ENCODE measurements at regions of chr12 and their contacts with region 1.

Region 1: DNA sequence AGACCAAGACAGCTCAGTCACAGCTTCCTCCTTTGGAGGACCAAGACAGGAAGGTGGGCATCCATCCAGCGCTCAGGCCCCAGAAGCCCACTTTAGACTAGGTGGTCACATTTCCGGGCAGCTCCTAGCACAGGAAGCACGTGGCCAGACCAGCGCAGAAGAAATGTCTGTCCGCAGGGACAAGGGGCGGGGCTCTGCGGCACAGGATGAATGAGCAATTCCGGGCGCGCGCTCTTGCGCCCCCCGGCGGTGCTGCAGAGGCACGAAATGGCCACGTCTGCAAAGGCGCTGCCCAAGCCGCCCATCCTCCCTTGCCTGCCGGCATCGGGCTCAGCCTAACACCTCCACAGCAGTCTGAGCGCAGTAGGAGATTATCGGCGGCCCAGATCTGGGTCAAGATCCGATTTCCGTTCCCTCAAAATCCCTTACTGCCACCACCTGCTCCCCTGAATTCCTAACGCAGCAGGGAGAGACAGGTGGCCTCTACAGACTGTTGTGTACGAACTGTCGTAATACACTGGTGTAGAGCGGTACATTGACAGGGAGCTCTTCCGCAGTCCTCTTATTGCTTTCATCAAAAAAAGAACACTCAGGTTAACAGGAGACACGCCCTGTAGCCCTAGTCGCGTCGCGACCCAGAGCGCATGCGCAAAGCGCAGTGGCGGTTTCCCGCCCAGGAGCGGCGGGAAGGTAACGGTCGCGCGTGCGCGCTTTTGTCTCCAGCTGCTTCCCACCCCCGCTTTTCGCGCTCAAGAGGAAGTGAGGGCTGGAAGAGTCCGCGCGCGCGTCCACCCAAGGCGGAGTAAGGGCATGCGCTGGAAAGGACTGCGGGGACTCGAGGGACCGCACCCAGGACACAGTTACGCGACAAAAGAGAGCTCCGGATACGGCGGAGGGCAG is 794 bp downstream of the TUBA1B start:
- DNase-seq: peak; percentile 85 to 94
- H3K4me3 ChIP-seq: peak overlapping the region; percentile 91 to 100 (median 94)
- H3K27ac ChIP-seq: peak overlapping the region; percentile 94
- H3K4me1 ChIP-seq: peaks cover 0 to 4% (median 2%) of the 10 kb centered on the region in 4 experiments; a peak in 4 of 7 replicates
- H3K27me3 ChIP-seq: no peaks in the 10 kb centered on the region
- CTCF ChIP-seq: peak; percentile 79 to 98 (median 94)
- EP300 ChIP-seq: peak in 1 of 2 experiments; percentile 28; a peak in 1 of 3 replicates
- POLR2A ChIP-seq: peak; percentile 32 to 85
- RAD21 ChIP-seq: peak; percentile 47 to 55

Region 2: DNA sequence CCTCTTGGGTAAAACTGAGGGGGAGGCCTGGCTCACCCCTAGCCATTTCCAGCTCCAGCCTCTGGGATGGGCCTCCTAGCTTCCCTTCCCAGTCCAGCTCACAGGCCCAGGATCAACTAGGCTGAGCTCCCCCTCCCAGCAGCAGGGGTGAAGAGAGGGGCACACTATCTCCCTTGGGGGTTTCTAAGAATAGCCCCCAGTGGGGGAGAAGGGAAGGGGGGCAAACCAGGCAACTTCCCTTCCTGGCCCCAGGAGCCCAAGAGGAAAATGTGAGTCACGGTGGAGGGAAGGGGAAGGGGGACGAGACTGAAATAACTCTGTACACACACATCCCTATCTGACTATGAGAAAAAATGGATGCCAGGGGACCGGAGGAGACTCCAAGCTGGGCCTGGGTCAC is 350.5 kb before region 1 on chr12:
- CTCF ChIA-PET with region 1: no interaction called
- POLR2A ChIA-PET with region 1: no interaction called
- DNase-seq: no peak
- H3K4me3 ChIP-seq: no peak overlapping the region
- H3K27ac ChIP-seq: no peak overlapping the region
- H3K4me1 ChIP-seq: peaks cover 0 to 14% (median 11%) of the 10 kb centered on the region in 4 experiments; a peak in 6 of 7 replicates
- H3K27me3 ChIP-seq: no peaks in the 10 kb centered on the region
- CTCF ChIP-seq: no peak
- EP300 ChIP-seq: no peak
- POLR2A ChIP-seq: no peak
- RAD21 ChIP-seq: no peak

Region 3: DNA sequence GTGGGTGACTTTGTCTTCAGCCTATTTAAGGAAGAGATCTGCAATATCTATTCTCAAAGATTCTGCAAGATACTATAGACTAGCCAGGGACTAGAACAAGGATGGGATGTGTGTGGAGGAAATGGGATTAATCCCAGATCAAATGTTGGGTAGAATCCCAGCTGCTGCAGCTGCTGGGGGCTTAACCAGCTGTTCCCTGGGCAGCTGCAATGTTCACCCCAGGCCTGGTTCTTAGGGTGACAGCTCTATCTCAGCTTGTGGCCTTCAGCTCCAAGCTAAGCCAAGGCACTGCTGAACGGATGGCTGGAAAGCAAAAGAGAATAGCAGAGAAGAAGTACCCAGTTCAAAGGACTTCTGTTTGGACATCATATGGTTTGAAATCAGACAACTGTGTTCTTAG is 50.6 kb before region 1 on chr12:
- CTCF ChIA-PET with region 1: interaction called, 4 read pairs
- POLR2A ChIA-PET with region 1: interaction called, 12 read pairs
- DNase-seq: no peak
- H3K4me3 ChIP-seq: no peak overlapping the region
- H3K27ac ChIP-seq: no peak overlapping the region
- H3K4me1 ChIP-seq: no peaks in the 10 kb centered on the region
- H3K27me3 ChIP-seq: no peaks in the 10 kb centered on the region; a peak in 1 of 7 replicates
- CTCF ChIP-seq: no peak
- EP300 ChIP-seq: no peak
- POLR2A ChIP-seq: no peak
- RAD21 ChIP-seq: no peak

Region 4: DNA sequence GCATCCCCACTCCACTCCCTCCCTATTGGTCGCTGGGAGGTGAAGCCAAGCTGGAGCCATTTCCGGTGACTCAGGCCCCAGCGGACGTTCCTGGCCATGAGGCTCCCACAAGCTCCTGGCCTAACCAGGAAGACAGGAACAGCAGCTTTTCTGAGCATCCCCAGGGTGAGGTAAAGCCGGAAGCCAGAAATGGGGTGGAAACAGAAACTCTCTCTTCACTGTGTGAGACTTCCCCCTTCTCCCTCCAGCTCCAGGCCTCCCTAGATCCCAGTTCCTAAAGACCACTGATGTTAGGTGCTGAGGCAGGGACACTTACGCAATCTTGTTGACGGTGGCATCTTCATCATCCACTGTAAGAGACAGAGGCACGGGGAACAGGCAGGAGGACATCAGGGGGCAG is 24.8 kb before region 1 on chr12:
- CTCF ChIA-PET with region 1: interaction called, 18 read pairs
- POLR2A ChIA-PET with region 1: interaction called, 51 read pairs
- DNase-seq: no peak
- H3K4me3 ChIP-seq: no peak overlapping the region
- H3K27ac ChIP-seq: no peak overlapping the region
- H3K4me1 ChIP-seq: peaks cover 0 to 7% (median 2%) of the 10 kb centered on the region in 4 experiments; a peak in 4 of 7 replicates
- H3K27me3 ChIP-seq: no peaks in the 10 kb centered on the region
- CTCF ChIP-seq: no peak
- EP300 ChIP-seq: no peak
- POLR2A ChIP-seq: no peak
- RAD21 ChIP-seq: no peak

Region 5: DNA sequence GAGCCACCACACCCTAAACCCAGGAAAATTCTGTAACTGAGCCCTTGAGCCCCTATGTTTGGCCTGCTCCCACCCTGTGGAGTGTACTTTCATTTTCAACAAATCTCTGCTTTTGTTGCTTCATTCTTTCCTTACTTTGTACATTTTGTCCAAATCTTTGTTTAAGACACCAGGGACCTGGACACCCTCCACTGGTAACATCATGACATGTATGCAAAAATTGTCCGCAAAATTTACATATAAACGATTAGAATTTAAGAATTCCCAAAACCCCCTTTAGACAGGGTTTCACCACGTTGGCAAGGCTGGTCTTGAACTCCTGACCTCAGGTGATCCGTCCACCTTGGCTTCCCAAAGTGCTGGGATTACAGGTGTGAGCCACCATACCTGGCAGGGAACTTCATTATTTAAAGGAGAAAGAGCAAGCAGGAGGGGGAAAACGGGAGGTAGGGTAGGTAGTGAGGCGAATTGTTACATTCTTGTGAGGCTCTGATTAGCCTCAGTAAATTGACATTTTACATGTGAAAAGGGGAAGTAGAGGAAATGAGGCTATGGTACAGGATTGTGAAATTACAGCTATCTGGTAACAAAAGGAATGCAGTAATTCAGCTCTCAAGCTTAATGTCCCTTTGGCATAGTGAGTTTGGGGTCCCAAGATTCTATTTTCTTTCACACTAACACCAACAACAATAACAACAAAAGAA is 30.8 kb after region 1 on chr12:
- CTCF ChIA-PET with region 1: no interaction called
- POLR2A ChIA-PET with region 1: interaction called, 36 read pairs
- DNase-seq: no peak
- H3K4me3 ChIP-seq: no peak overlapping the region
- H3K27ac ChIP-seq: no peak overlapping the region
- H3K4me1 ChIP-seq: peaks cover 0 to 3% (median 0%) of the 10 kb centered on the region in 4 experiments; a peak in 1 of 7 replicates
- H3K27me3 ChIP-seq: no peaks in the 10 kb centered on the region
- CTCF ChIP-seq: no peak
- EP300 ChIP-seq: no peak
- POLR2A ChIP-seq: no peak
- RAD21 ChIP-seq: no peak

Region 6: DNA sequence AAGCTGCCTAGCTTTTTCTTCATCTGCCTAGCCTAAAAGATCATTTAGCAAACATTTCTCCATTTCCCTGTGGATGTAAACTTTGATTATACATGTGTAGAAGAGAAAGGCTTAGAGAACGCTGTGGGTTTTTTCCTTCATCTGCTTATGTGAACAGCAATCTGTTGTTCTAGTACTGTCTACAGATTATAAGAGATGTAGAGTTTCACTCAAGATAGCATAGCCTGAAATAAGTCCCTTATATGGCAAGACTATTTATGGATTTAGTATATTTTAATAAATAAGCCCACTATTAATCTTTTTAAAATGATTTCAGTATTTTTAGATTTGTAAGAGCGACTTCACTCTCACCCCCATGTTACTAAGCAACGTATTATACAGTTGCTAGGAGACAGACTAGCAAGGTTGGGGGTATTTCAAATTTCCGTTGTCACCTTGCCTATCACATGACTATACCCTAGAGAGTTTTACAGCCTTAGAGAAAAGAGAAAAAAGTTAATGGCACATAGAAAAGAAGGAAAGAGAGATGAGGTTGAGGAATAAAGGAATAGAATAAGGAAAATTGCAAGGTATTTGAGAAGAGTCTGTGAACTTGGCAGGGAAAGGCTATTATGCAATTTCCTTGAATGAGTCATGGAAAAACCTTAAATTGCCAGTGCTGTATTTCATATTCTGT is 70.7 kb after region 1 on chr12:
- CTCF ChIA-PET with region 1: interaction called, 3 read pairs
- POLR2A ChIA-PET with region 1: interaction called, 48 read pairs
- DNase-seq: no peak
- H3K4me3 ChIP-seq: peak overlapping the region in 1 of 4 experiments; percentile 10; a peak in 1 of 8 replicates
- H3K27ac ChIP-seq: no peak overlapping the region
- H3K4me1 ChIP-seq: peaks cover 0 to 16% (median 4%) of the 10 kb centered on the region in 4 experiments; a peak in 3 of 7 replicates
- H3K27me3 ChIP-seq: peaks cover 0 to 2% (median 0%) of the 10 kb centered on the region in 4 experiments; a peak in 1 of 7 replicates
- CTCF ChIP-seq: no peak
- EP300 ChIP-seq: no peak
- POLR2A ChIP-seq: no peak
- RAD21 ChIP-seq: no peak

Region 7: GRCh38 chr12:49232940-49233841 is 102.8 kb after region 1 on chr12:
- CTCF ChIA-PET with region 1: interaction called, 7 read pairs
- POLR2A ChIA-PET with region 1: interaction called, 17 read pairs
- DNase-seq: peak in 1 of 2 experiments; percentile 66
- H3K4me3 ChIP-seq: no peak overlapping the region
- H3K27ac ChIP-seq: 0 out of 2 replicates have a peak overlapping the region, but pooled peaks have one; percentile 21
- H3K4me1 ChIP-seq: peaks cover 3 to 13% (median 7%) of the 10 kb centered on the region in 4 experiments
- H3K27me3 ChIP-seq: peaks cover 0 to 2% (median 0%) of the 10 kb centered on the region in 4 experiments; a peak in 2 of 7 replicates
- CTCF ChIP-seq: no peak
- EP300 ChIP-seq: no peak
- POLR2A ChIP-seq: no peak
- RAD21 ChIP-seq: no peak

Measured in H1 (cell line).